ENCODE measurements at regions of chr3 and their contacts with region 1.

Region 1: DNA sequence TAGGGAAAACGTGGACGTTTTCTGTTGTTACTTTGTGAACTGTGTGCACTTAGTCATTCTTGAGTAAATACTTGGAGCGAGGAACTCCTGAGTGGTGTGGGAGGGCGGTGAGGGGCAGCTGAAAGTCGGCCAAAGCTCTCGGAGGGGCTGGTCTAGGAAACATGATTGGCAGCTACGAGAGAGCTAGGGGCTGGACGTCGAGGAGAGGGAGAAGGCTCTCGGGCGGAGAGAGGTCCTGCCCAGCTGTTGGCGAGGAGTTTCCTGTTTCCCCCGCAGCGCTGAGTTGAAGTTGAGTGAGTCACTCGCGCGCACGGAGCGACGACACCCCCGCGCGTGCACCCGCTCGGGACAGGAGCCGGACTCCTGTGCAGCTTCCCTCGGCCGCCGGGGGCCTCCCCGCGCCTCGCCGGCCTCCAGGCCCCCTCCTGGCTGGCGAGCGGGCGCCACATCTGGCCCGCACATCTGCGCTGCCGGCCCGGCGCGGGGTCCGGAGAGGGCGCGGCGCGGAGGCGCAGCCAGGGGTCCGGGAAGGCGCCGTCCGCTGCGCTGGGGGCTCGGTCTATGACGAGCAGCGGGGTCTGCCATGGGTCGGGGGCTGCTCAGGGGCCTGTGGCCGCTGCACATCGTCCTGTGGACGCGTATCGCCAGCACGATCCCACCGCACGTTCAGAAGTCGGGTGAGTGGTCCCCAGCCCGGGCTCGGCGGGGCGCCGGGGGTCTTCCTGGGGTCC is at the start of gene TGFBR2:
- DNase-seq: peak; percentile 57 to 85 (median 69)
- ATAC-seq: peak; percentile 84
- H3K4me3 ChIP-seq: peak within 1 kb of the TSS; percentile 76
- H3K4me3 Mint-ChIP-seq: peak within 1 kb of the TSS; percentile 88 to 100 (median 99)
- H3K27ac ChIP-seq: peak within 1 kb of the TSS; percentile 91
- H3K27ac Mint-ChIP-seq: peak within 1 kb of the TSS; percentile 93 to 100 (median 98)
- H3K4me1 ChIP-seq: peaks cover 32 to 39% of the 10 kb centered on the region in 2 donors
- H3K4me1 Mint-ChIP-seq: peaks cover 45 to 68% (median 55%) of the 10 kb centered on the region in 7 donors
- H3K27me3 ChIP-seq: no peaks in the 10 kb centered on the region
- H3K27me3 Mint-ChIP-seq: no peaks in the 10 kb centered on the region
- total RNA-seq, gene TGFBR2: 63.0 to 171 (median 155) TPM

Region 2: DNA sequence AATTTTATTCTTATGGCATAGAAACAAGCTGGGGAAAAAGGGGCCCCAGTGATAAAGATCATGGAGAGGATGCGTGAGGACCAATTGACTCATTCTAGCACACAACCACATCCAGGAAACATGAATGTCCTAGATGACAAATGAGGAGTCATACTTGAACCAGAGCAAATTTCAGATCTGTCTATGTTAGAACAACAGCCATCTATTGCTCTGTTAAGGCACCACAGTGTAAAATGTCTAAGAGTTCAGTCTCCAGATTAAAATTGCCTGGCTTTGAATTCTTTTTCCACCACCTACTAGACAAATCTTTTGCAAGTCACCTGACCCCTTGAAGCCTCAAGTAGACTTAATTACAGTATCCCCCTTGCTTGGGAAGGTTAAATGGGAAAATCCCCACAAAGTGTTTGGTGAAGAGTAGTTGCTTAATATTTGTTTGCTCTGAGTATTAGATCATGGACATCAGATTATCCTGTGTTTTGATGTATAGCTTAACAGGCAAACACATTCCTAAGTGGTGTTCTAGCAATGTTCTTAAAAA is 258.7 kb before region 1 on chr3:
- CTCF ChIA-PET with region 1: no interaction called
- POLR2A ChIA-PET with region 1: interaction called, 3 read pairs
- intact Hi-C with region 1: loop called in 1 of 2 experiments (anchors 2 kb)
- DNase-seq: peak in 6 of 9 donors; percentile 11 to 48 (median 32)
- ATAC-seq: peak; percentile 54
- H3K4me3 ChIP-seq: no peak overlapping the region
- H3K4me3 Mint-ChIP-seq: peak overlapping the region in 6 of 10 donors; percentile 5 to 70 (median 32)
- H3K27ac ChIP-seq: no peak overlapping the region
- H3K27ac Mint-ChIP-seq: peak overlapping the region in 5 of 9 donors; percentile 33 to 80 (median 76)
- H3K4me1 ChIP-seq: peaks cover 15 to 47% of the 10 kb centered on the region in 2 donors
- H3K4me1 Mint-ChIP-seq: peaks cover 40 to 82% (median 71%) of the 10 kb centered on the region in 7 donors
- H3K27me3 ChIP-seq: no peaks in the 10 kb centered on the region
- H3K27me3 Mint-ChIP-seq: peaks cover 0 to 17% (median 0%) of the 10 kb centered on the region in 5 donors

Region 3: GRCh38 chr3:30563956-30564355 is 42.5 kb before region 1 on chr3:
- CTCF ChIA-PET with region 1: no interaction called
- POLR2A ChIA-PET with region 1: no interaction called
- intact Hi-C with region 1: loop called in 1 of 2 experiments (anchors 5 kb)
- DNase-seq: no peak
- ATAC-seq: no peak
- H3K4me3 ChIP-seq: no peak overlapping the region
- H3K4me3 Mint-ChIP-seq: no peak overlapping the region
- H3K27ac ChIP-seq: no peak overlapping the region
- H3K27ac Mint-ChIP-seq: no peak overlapping the region
- H3K4me1 ChIP-seq: no peaks in the 10 kb centered on the region
- H3K4me1 Mint-ChIP-seq: peaks cover 0 to 4% (median 0%) of the 10 kb centered on the region in 7 donors
- H3K27me3 ChIP-seq: no peaks in the 10 kb centered on the region
- H3K27me3 Mint-ChIP-seq: no peaks in the 10 kb centered on the region

Region 4: GRCh38 chr3:30628901-30629590 is 22.6 kb after region 1 on chr3:
- CTCF ChIA-PET with region 1: interaction called, 6 read pairs
- POLR2A ChIA-PET with region 1: interaction called, 853 read pairs
- intact Hi-C with region 1: loop called (anchors 1 kb)
- DNase-seq: peak in 2 of 9 donors; percentile 53 to 55
- ATAC-seq: peak; percentile 51
- H3K4me3 ChIP-seq: peak overlapping the region; percentile 29
- H3K4me3 Mint-ChIP-seq: peak overlapping the region; percentile 53 to 88 (median 72)
- H3K27ac ChIP-seq: peak overlapping the region; percentile 68
- H3K27ac Mint-ChIP-seq: peak overlapping the region; percentile 84 to 98 (median 96)
- H3K4me1 ChIP-seq: peaks cover 81 to 97% of the 10 kb centered on the region in 2 donors
- H3K4me1 Mint-ChIP-seq: peaks cover 64 to 100% (median 93%) of the 10 kb centered on the region in 7 donors
- H3K27me3 ChIP-seq: no peaks in the 10 kb centered on the region
- H3K27me3 Mint-ChIP-seq: no peaks in the 10 kb centered on the region

Region 5: GRCh38 chr3:30658328-30659052 is 52.0 kb after region 1 on chr3:
- CTCF ChIA-PET with region 1: interaction called, 6 read pairs
- POLR2A ChIA-PET with region 1: interaction called, 853 read pairs
- intact Hi-C with region 1: loop called (anchors 1 kb)
- DNase-seq: peak in 7 of 9 donors; percentile 72 to 86 (median 84)
- ATAC-seq: peak; percentile 71
- H3K4me3 ChIP-seq: peak overlapping the region; percentile 24
- H3K4me3 Mint-ChIP-seq: peak overlapping the region; percentile 71 to 88 (median 80)
- H3K27ac ChIP-seq: peak overlapping the region; percentile 84
- H3K27ac Mint-ChIP-seq: peak overlapping the region; percentile 91 to 99 (median 97)
- H3K4me1 ChIP-seq: peaks cover 82 to 98% of the 10 kb centered on the region in 2 donors
- H3K4me1 Mint-ChIP-seq: peaks cover 67 to 100% (median 94%) of the 10 kb centered on the region in 7 donors
- H3K27me3 ChIP-seq: no peaks in the 10 kb centered on the region
- H3K27me3 Mint-ChIP-seq: no peaks in the 10 kb centered on the region

Region 6: GRCh38 chr3:32004113-32004765 is 1397.8 kb after region 1 on chr3:
- CTCF ChIA-PET with region 1: no interaction called
- POLR2A ChIA-PET with region 1: no interaction called
- intact Hi-C with region 1: no loop called
- DNase-seq: no peak
- ATAC-seq: no peak
- H3K4me3 ChIP-seq: no peak overlapping the region
- H3K4me3 Mint-ChIP-seq: no peak overlapping the region
- H3K27ac ChIP-seq: no peak overlapping the region
- H3K27ac Mint-ChIP-seq: no peak overlapping the region
- H3K4me1 ChIP-seq: no peaks in the 10 kb centered on the region
- H3K4me1 Mint-ChIP-seq: peaks cover 0 to 8% (median 0%) of the 10 kb centered on the region in 7 donors
- H3K27me3 ChIP-seq: no peaks in the 10 kb centered on the region
- H3K27me3 Mint-ChIP-seq: peaks cover 6 to 31% (median 15%) of the 10 kb centered on the region in 5 donors